ENCODE measurements at regions of chr5 and their contacts with region 1.

Region 1: GRCh38 chr5:161676103-161676502 is 9.4 kb upstream of the GABRA6 start:
- DNase-seq: peak; percentile 22
- H3K4me3 ChIP-seq: no peak overlapping the region
- H3K27ac ChIP-seq: no peak overlapping the region
- H3K4me1 ChIP-seq: no peaks in the 10 kb centered on the region
- CTCF ChIP-seq: peak; percentile 70

Region 2: GRCh38 chr5:161544350-161544765 is 131.7 kb before region 1 on chr5:
- CTCF ChIA-PET with region 1: no interaction called
- POLR2A ChIA-PET with region 1: no interaction called
- intact Hi-C with region 1: loop called (anchors 10 kb)
- DNase-seq: peak; percentile 76
- H3K4me3 ChIP-seq: peak overlapping the region; percentile 92
- H3K27ac ChIP-seq: no peak overlapping the region
- H3K4me1 ChIP-seq: peaks cover 13% of the 10 kb centered on the region
- CTCF ChIP-seq: peak; percentile 95

Region 3: GRCh38 chr5:161580621-161581020 is 95.5 kb before region 1 on chr5:
- CTCF ChIA-PET with region 1: no interaction called
- POLR2A ChIA-PET with region 1: no interaction called
- intact Hi-C with region 1: no loop called
- DNase-seq: no peak
- H3K4me3 ChIP-seq: no peak overlapping the region
- H3K27ac ChIP-seq: no peak overlapping the region
- H3K4me1 ChIP-seq: no peaks in the 10 kb centered on the region
- CTCF ChIP-seq: no peak